Calu3 (cell line): ENCODE measurements at regions of chr10 and their contacts with region 1.

Region 1: GRCh38 chr10:6647811-6648526 is 67.9 kb upstream of the PRKCQ start:
- DNase-seq: peak; percentile 71
- H3K4me3 Mint-ChIP-seq: no peak overlapping the region
- H3K27ac Mint-ChIP-seq: no peak overlapping the region
- H3K4me1 Mint-ChIP-seq: no peaks in the 10 kb centered on the region
- H3K27me3 Mint-ChIP-seq: peaks cover 82% of the 10 kb centered on the region
- CTCF ChIP-seq: peak; percentile 88

Region 2: GRCh38 chr10:6416892-6417512 is 231.0 kb before region 1 on chr10:
- CTCF ChIA-PET with region 1: no interaction called
- intact Hi-C with region 1: loop called (anchors 5 kb)
- DNase-seq: peak; percentile 27
- H3K4me3 Mint-ChIP-seq: no peak overlapping the region
- H3K27ac Mint-ChIP-seq: no peak overlapping the region
- H3K4me1 Mint-ChIP-seq: no peaks in the 10 kb centered on the region
- H3K27me3 Mint-ChIP-seq: peaks cover 15% of the 10 kb centered on the region
- CTCF ChIP-seq: peak; percentile 31

Region 3: GRCh38 chr10:6482737-6483357 is 165.1 kb before region 1 on chr10:
- CTCF ChIA-PET with region 1: no interaction called
- intact Hi-C with region 1: no loop called
- DNase-seq: no peak
- H3K4me3 Mint-ChIP-seq: no peak overlapping the region
- H3K27ac Mint-ChIP-seq: no peak overlapping the region
- H3K4me1 Mint-ChIP-seq: no peaks in the 10 kb centered on the region
- H3K27me3 Mint-ChIP-seq: peaks cover 66% of the 10 kb centered on the region
- CTCF ChIP-seq: no peak